Activated T-helper 2 cell treated with anti-CD3 and anti-CD28 coated beads, Interferon-gamma antibody, Interleukin-2, Interleukin-4, amounts not matched to agents 10 μg/mL and 5 μg/mL and 100 μg/mL, durations not matched to agents 14 hours and 24 hours and 36 hours (primary cell): ENCODE measurements at regions of chr3 and their contacts with region 1.

Region 1: GRCh38 chr3:45037734-45038455 is 11.8 kb downstream of the CLEC3B start:
- DNase-seq: peak; percentile 88
- H3K4me3 Mint-ChIP-seq: no peak overlapping the region
- H3K27ac Mint-ChIP-seq: no peak overlapping the region
- H3K4me1 Mint-ChIP-seq: peaks cover 53% of the 10 kb centered on the region
- H3K27me3 Mint-ChIP-seq: peaks cover 8% of the 10 kb centered on the region

Region 2: DNA sequence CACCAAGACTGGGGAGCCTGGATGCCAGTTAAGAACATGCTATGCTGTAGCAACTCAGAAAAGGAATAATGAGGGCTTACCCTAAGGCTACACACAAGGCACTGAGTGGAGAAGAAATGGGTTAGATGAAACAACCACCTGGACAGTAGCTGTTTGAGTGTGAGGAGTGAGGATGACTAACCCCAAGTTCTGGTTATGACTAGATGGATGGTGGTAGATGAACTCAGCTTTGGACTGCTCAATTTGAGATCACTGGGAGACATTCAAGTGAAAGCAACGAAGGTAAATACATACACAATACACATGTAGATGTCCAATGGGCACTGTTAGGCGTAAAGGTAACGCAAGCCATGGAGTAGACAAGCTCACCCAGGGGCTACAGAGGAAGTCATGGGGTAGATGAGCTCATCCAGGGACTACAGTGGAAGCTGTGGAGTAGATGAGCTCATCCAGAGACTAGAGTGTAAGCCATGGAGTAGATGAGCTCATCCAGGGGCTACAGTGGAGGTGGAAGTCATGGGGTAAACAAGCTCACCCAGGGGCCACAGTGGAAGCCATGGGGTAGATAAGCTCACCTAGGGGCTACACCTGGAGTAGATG is 1514.3 kb before region 1 on chr3:
- intact Hi-C with region 1: no loop called
- DNase-seq: no peak
- H3K4me3 Mint-ChIP-seq: no peak overlapping the region
- H3K27ac Mint-ChIP-seq: no peak overlapping the region
- H3K4me1 Mint-ChIP-seq: no peaks in the 10 kb centered on the region
- H3K27me3 Mint-ChIP-seq: peaks cover 3% of the 10 kb centered on the region

Region 3: GRCh38 chr3:45210308-45211041 is 172.6 kb after region 1 on chr3:
- intact Hi-C with region 1: loop called (anchors 1 kb)
- DNase-seq: peak; percentile 69
- H3K4me3 Mint-ChIP-seq: no peak overlapping the region
- H3K27ac Mint-ChIP-seq: no peak overlapping the region
- H3K4me1 Mint-ChIP-seq: peaks cover 31% of the 10 kb centered on the region
- H3K27me3 Mint-ChIP-seq: peaks cover 11% of the 10 kb centered on the region

Region 4: GRCh38 chr3:45343947-45344346 is 306.1 kb after region 1 on chr3:
- intact Hi-C with region 1: loop called (anchors 1 kb)
- DNase-seq: no peak
- H3K4me3 Mint-ChIP-seq: no peak overlapping the region
- H3K27ac Mint-ChIP-seq: no peak overlapping the region
- H3K4me1 Mint-ChIP-seq: no peaks in the 10 kb centered on the region
- H3K27me3 Mint-ChIP-seq: peaks cover 6% of the 10 kb centered on the region

Region 5: DNA sequence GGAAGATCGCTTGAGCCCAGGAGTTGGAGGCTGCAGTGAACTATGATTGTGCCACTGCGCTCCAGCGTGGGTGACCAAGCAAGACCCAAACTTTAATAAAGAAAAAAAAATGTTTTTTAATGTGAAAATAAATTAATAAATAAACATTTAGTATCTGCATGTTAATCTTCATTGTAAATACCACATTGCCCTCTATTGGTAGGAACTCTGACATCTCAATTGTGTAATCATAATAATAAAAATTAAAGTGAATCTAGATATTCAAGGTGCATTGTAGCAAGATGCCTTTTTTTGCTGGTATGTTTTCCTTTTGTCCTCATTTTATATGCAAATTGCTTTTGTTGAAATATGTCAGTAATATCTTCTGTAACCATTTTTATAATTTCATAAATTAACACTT is 461.6 kb after region 1 on chr3:
- intact Hi-C with region 1: loop called (anchors 1 kb)
- DNase-seq: no peak
- H3K4me3 Mint-ChIP-seq: no peak overlapping the region
- H3K27ac Mint-ChIP-seq: no peak overlapping the region
- H3K4me1 Mint-ChIP-seq: peaks cover 2% of the 10 kb centered on the region
- H3K27me3 Mint-ChIP-seq: no peaks in the 10 kb centered on the region